ENCODE measurements at regions of chr2 and their contacts with region 1.

Region 1: DNA sequence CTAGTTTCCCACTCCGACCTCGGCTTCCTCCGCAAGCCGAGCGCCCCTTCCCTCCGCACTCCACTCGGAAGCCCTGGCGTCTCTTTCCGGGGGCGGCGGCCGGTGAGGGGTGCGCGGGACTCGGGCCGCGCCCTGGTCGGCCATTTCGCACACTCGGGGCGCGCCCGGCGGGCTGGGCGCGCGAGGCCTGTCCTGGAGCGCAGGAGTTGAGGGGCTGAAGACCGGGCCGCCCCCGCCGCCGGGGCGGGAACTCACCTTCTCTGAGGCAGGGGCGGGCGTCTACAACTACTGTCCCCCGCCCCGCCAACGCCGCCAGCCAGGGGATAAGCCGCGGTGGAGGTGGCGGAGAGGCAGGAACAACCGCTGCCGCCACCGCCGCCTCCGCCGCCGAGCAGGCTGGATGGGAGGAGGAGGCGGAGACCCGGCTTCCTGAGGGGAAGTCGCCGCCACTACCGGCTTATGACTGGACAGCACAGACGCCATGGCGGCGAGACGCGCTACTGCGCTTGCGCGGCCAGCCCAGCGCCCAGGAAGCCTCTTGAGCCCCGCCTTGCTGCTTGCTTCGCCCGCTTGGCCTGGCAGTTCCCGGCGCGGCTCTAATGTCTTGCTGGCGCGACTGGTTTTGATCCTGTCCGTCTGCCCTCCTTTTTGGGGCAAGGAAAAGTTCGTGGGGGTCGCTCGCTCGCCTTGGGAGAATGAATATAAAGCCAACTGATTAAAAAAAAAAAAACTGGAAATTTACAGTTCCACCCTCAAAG is at the start of gene KRCC1:
- DNase-seq: peak; percentile 94
- H3K4me3 Mint-ChIP-seq: peak within 1 kb of the TSS; percentile 99
- H3K27ac Mint-ChIP-seq: peak within 1 kb of the TSS; percentile 98
- H3K4me1 Mint-ChIP-seq: peaks cover 61% of the 10 kb centered on the region
- H3K27me3 Mint-ChIP-seq: no peaks in the 10 kb centered on the region
- total RNA-seq, gene KRCC1: 17.5 and 18.7 TPM in 2 replicates

Region 2: DNA sequence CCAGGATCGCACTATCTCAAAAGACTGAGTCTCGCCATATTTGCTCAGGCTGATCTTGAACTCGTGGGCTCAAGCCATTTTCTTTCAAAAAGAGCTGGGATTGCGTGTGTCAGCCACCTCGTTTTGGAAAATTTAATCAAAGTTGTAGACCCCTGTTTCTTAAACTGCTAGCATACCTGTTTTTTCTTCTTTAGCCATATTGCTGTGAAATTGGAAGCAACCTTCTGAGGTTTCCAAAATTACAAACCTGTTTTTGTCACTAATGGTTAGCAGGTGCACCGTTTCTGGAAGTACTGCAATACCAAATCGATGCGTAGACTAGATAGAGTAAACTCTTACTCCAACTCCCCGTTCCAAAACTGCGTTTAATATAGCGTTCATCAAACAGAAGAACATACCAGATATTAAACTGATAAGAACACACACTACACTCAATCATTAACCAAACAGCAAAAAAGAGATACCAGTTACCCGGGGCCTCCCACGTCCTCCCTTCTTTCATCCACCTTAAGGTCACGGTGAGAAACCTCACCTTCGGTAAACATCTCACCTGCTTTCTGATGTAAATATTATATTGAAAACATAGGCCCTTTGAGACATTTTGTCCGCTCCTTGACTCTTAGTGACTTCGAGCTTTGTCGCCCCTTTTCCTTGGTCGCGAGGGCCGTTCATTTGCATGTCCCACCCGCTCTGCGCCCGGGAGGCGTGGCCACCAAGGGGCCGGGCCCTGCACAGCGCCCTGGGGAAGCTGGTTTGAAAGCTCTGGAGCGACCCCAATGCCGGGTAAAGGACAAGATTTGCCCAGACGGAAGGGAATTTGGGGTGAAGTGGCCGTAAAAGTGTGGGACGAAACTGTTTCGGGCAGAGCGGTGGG is 39.2 kb before region 1 on chr2 and contains the start of gene RNU2-63P:
- intact Hi-C with region 1: loop called (anchors 1 kb)
- DNase-seq: peak; percentile 74
- H3K4me3 Mint-ChIP-seq: peak within 1 kb of the TSS; percentile 94
- H3K27ac Mint-ChIP-seq: peak within 1 kb of the TSS; percentile 98
- H3K4me1 Mint-ChIP-seq: peaks cover 14% of the 10 kb centered on the region
- H3K27me3 Mint-ChIP-seq: no peaks in the 10 kb centered on the region
- total RNA-seq, gene RNU2-63P: 19.7 and 21.6 TPM in 2 replicates

Region 3: DNA sequence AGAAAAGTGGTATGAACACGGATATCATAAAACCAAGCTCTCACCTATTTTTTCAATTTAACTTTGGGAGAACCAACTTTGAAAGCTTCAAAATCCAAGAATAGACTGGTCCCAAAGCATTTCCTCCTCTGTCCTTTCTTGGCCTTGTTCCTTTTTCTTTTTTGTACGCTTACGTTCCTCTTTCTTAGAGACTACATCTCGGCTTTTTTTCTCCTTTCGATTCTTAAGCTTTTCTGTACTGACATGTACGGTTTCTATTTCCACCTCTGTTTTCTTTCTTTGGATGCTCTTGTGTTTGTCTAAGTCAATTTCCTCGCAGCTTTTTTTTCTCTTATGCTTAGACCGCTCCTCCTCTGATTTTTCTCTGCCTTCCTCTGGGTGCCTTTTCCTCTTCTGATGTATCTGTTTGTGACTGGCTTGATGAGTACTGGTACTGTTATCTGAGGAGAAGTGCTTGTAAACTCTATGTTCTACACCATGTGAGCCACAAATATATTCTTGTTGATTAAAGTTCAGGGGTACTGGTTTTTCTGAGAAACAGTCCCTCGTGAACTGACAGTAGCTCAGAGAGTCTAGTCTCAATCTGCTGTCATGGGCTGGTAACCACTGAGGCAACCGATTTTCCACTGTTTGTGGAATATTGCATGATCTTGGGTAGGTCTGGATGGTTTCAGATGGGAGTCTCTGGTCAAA is 27.7 kb before region 1 on chr2:
- intact Hi-C with region 1: loop called (anchors 2 kb)
- DNase-seq: no peak
- H3K4me3 Mint-ChIP-seq: peak overlapping the region; percentile 71
- H3K27ac Mint-ChIP-seq: peak overlapping the region; percentile 83
- H3K4me1 Mint-ChIP-seq: peaks cover 12% of the 10 kb centered on the region
- H3K27me3 Mint-ChIP-seq: no peaks in the 10 kb centered on the region

Region 4: DNA sequence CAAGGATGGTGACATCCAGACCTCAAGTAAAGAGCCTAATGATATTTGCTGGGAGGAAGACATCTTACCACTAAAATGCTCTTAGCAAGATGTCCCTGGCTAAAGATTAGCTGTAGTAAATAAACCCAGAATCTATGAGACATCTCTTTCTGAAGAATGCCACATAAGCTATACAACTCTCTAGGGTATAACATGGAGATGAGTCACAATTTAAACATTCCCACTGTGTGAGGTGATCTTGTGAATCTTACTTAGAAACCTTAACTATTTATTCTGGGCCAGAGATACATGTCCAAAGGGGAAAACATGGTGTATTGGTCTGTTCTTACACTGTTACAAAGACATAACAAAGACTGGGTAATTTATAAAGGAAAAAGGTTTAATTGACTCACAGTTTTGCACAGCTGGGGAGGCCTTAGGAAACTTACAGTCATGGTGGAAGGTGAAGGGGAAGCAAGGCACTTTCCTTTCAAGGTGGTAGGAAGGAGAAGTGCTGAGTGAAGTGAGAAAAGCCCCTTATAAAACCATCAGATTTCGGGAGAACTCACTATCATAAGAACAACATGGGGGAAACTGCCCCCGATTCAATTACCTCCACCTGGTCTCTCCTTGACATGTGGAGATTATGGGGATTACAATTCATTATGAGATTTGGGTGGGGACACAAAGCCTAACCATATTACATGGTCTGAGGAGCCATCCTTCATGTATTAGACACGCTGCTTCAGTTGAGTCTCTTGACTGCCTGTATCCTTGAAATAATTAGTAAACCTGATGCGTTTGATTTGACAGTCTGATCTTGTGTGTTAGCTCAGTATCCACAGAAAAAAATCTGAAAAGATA is 17.1 kb before region 1 on chr2:
- intact Hi-C with region 1: loop called (anchors 2 kb)
- DNase-seq: no peak
- H3K4me3 Mint-ChIP-seq: no peak overlapping the region
- H3K27ac Mint-ChIP-seq: peak overlapping the region; percentile 71
- H3K4me1 Mint-ChIP-seq: peaks cover 26% of the 10 kb centered on the region
- H3K27me3 Mint-ChIP-seq: no peaks in the 10 kb centered on the region

Region 5: DNA sequence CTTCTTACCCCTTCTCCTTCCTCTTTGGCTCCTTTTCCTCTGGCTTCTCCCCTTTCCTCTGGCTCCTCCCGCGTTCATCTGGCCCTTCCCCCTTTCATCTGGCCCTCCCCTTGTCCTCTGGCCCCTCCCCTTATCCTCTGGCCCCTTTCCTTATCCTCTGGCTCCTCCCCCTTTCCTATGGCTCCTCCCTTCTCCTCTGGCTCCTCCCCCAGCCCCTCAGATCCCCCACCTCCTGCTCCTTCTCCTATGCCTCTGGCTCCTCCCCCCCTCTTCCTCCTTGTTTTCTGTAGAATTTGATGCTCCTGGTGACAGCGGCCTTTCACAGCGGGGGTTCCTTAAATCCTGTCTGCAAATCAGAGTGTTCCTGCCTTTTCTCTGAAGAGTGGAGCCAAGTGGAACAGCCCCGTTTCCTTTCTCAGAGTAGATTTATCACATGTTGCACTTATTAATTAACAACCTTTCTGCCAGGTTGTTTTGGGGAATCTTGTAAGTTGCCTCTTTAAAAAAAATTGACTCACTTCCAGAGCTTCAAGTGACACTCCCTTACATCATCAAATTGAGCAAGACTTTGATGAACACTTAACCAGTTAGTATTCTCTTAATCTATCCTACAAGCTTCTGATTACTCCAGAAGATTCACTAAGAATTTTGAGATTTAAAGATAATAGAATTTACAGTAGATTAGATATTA is 44.4 kb after region 1 on chr2:
- intact Hi-C with region 1: no loop called
- DNase-seq: no peak
- H3K4me3 Mint-ChIP-seq: no peak overlapping the region
- H3K27ac Mint-ChIP-seq: no peak overlapping the region
- H3K4me1 Mint-ChIP-seq: no peaks in the 10 kb centered on the region
- H3K27me3 Mint-ChIP-seq: peaks cover 1% of the 10 kb centered on the region

Region 6: DNA sequence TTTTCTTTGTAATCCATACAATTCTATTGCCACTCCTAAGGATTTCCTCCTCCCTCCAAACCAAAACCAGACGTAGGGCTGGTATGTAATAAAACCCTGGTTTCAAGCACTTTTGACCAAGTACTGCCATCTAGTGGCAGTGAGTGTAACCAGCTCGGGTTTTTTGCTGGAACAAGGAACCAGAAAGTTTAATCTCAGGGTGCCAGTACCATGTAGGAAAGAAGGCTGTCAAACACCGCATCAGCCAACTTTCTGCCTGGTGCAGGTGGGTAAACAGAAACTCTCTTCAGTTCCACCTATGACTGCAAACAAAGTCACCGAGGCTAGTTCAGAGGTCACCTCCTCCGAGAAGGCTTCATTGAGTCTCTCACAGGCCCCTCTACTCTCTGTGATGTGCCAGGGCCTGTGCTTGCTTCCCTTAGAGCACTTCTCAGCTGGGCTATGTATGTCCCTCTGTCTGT is 104.4 kb after region 1 on chr2:
- intact Hi-C with region 1: loop called (anchors 1 kb)
- DNase-seq: peak; percentile 32
- H3K4me3 Mint-ChIP-seq: no peak overlapping the region
- H3K27ac Mint-ChIP-seq: no peak overlapping the region
- H3K4me1 Mint-ChIP-seq: no peaks in the 10 kb centered on the region
- H3K27me3 Mint-ChIP-seq: peaks cover 7% of the 10 kb centered on the region

Region 7: DNA sequence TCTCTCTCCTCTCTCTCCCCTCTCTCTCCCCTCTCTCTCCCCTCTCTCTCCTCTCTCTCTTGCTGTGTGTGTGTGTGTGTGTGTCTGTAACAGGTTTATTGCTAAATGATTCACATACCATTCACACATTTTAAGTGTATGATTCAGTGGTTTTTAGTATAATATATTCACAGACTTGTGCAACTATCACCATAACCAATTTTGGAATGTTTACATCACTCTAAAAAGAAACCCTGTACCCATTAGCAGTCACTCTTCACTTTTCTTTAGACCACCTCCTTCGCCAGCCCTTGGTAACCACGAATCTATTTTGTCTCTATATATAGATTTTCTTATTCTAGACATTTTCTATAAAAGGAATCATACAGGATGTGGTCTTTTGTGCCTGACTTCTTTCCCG is 126.0 kb after region 1 on chr2:
- intact Hi-C with region 1: loop called (anchors 5 kb)
- DNase-seq: no peak
- H3K4me3 Mint-ChIP-seq: no peak overlapping the region
- H3K27ac Mint-ChIP-seq: peak overlapping the region; percentile 43
- H3K4me1 Mint-ChIP-seq: peaks cover 12% of the 10 kb centered on the region
- H3K27me3 Mint-ChIP-seq: peaks cover 16% of the 10 kb centered on the region

Measured in activated T-helper 2 cell treated with anti-CD3 and anti-CD28 coated beads, Interferon-gamma antibody, Interleukin-2, Interleukin-4, amounts not matched to agents 10 μg/mL and 5 μg/mL and 100 μg/mL, durations not matched to agents 14 hours and 24 hours and 36 hours (primary cell).